ENCODE measurements at regions of chr1 and their contacts with region 1.

Region 1: DNA sequence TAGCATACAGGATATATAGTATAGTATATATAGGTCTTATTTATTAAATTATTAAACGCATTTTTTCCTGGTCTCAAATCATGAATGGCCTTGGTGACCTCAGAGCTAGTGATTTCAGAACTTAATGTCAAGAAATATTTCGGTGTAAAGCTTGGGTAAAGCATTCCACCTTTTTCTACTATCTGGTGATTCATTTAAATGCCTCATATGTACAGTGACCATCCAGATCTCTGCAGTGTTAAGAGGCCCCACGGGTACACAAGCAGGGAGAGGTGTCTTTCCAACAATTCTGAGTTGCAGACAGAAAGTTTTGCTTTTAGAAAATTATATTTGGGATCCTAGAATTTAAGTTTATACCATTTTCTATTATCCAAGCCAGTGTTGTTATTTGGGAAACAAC is 626.5 kb downstream of the PTPRC start:
- DNase-seq: no peak
- ATAC-seq: no peak
- H3K4me3 ChIP-seq: no peak overlapping the region
- H3K27ac ChIP-seq: no peak overlapping the region
- H3K4me1 ChIP-seq: no peaks in the 10 kb centered on the region
- H3K27me3 ChIP-seq: no peaks in the 10 kb centered on the region
- CTCF ChIP-seq: no peak

Region 2: GRCh38 chr1:199243423-199244061 is 21.8 kb before region 1 on chr1:
- intact Hi-C with region 1: loop called in 1 of 2 experiments (anchors 2 kb)
- DNase-seq: peak in 1 of 2 donors; percentile 53
- ATAC-seq: peak in 1 of 4 donors; percentile 45
- H3K4me3 ChIP-seq: no peak overlapping the region
- H3K27ac ChIP-seq: no peak overlapping the region
- H3K4me1 ChIP-seq: no peaks in the 10 kb centered on the region
- H3K27me3 ChIP-seq: no peaks in the 10 kb centered on the region
- CTCF ChIP-seq: no peak